ENCODE measurements at regions of chr5 and their contacts with region 1.

Region 1: GRCh38 chr5:54905943-54906537 is 79.4 kb downstream of the ESM1 start:
- DNase-seq: peak; percentile 50
- H3K4me3 Mint-ChIP-seq: no peak overlapping the region
- H3K27ac Mint-ChIP-seq: no peak overlapping the region
- H3K4me1 Mint-ChIP-seq: peaks cover 65% of the 10 kb centered on the region
- H3K27me3 Mint-ChIP-seq: peaks cover 29% of the 10 kb centered on the region

Region 2: DNA sequence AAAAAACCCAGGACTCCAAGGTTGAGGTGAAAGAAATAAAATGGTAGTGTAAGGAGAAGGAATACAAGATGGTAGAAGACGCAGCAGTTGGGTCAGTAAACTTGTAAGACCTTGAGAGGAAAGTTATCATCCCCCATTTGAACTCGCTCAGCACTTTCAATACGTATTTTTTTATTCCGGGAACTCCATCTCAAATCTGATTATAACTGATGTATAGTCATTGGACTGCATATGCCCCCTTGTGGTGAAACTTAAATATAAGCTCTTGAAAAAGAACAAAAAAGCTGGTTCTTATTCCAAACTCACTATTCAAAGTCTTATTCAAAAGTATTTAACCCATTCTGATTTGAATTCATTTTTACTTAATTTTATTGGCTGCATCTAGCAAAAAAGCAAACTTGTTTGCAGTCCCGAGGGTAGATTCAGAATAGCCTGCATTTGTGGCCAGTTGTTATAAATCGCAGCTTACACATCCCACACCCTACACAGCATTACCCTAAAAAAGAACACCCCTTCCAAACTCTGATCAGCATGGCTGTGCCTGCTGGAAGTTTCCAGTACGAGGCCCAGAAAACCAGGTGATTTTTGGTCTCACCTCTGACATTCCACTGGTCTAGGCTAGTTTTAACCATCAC is 38.6 kb before region 1 on chr5:
- intact Hi-C with region 1: loop called (anchors 1 kb)
- DNase-seq: no peak
- H3K4me3 Mint-ChIP-seq: no peak overlapping the region
- H3K27ac Mint-ChIP-seq: no peak overlapping the region
- H3K4me1 Mint-ChIP-seq: peaks cover 29% of the 10 kb centered on the region
- H3K27me3 Mint-ChIP-seq: peaks cover 64% of the 10 kb centered on the region

Region 3: DNA sequence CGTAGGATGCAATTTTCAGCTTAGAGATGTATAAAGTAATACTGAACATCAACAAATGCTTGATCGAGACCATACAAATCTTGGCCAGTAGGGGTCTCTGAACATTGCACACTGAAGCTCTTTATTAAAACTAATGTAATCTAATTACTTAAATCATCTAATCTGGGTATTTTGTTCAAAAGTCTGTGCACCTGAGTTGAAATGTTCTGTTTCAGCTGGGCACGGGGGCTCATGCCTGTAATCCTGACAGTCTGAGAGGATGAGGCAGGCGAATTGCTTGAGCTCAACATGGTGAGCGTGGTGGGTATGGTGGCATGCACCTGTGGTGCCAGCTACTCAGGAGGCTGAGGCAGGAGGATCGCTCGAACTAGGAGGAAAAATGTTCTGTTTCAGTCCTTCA is 38.3 kb after region 1 on chr5:
- intact Hi-C with region 1: loop called (anchors 5 kb)
- DNase-seq: no peak
- H3K4me3 Mint-ChIP-seq: no peak overlapping the region
- H3K27ac Mint-ChIP-seq: no peak overlapping the region
- H3K4me1 Mint-ChIP-seq: peaks cover 22% of the 10 kb centered on the region
- H3K27me3 Mint-ChIP-seq: no peaks in the 10 kb centered on the region

Region 4: DNA sequence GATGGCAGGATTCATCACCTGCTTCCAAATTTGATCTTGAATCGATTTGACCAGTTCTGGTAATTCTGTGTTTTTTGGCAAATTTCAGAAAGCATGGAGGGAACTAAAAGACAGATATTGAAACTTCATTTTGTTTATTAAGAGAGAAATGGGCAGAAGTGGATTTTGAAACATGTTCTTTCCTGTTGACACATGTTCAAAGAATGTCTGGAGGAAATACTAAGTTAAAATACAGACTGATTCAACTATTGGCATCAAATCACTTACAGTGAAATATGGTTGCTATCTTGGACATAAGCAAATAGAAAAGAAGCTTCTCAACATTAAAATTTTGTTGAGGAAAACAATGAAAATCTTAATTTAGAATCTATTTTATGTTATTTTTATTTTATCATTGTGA is 98.7 kb after region 1 on chr5:
- intact Hi-C with region 1: no loop called
- DNase-seq: no peak
- H3K4me3 Mint-ChIP-seq: no peak overlapping the region
- H3K27ac Mint-ChIP-seq: no peak overlapping the region
- H3K4me1 Mint-ChIP-seq: peaks cover 70% of the 10 kb centered on the region
- H3K27me3 Mint-ChIP-seq: peaks cover 3% of the 10 kb centered on the region

Region 5: GRCh38 chr5:55159763-55160492 is 253.9 kb after region 1 on chr5 and contains the start of gene GPX8:
- intact Hi-C with region 1: loop called (anchors 1 kb)
- DNase-seq: no peak
- H3K4me3 Mint-ChIP-seq: no peak within 1 kb of the TSS
- H3K27ac Mint-ChIP-seq: no peak within 1 kb of the TSS
- H3K4me1 Mint-ChIP-seq: peaks cover 5% of the 10 kb centered on the region
- H3K27me3 Mint-ChIP-seq: peaks cover 56% of the 10 kb centered on the region
- total RNA-seq, gene GPX8: not detected in 2 replicates

Measured in activated T-helper 2 cell treated with anti-CD3 and anti-CD28 coated beads, Interferon-gamma antibody, Interleukin-2, Interleukin-4, amounts not matched to agents 10 μg/mL and 5 μg/mL and 100 μg/mL, durations not matched to agents 14 hours and 24 hours and 36 hours (primary cell).